Heart right ventricle (tissue), 16 donors: ENCODE measurements at regions of chr17 and their contacts with region 1.

Region 1: DNA sequence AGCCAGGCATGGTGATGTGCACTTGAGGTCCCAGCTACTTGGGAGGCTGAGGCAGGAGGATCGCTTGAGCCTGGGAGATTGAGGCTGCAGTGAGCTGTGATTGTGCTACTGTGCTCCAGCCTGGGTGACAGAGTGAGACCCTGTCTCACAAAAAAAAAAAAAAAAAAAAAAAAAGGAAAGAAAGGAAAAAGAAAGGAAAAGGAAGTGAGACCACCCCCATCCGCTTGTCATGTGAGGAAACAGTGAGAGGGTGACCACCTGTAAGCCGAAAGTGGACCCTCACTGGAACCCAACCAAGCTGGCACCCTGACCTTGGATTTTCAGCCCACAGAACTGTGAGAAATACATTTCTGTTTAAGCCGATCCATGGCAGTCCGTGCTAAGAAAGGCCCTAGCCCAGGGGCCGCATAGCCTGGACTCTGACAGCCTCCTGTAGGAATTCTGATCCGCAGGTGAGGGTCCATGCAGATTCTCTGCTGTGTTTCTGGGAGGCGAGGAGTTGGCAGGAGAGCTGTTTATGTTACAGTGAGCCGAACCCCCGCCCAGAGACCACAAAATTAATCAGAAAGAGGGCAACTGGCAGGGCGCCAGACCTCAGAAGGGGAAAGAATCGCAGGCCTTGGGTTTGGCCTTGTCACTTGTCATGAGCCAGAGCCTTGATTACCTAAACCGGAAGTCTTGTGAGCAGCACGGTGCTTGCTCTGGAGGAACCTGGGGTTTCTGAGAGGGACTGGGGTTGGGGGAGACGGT is 945 bp downstream of the SGSH start:
- DNase-seq: peak; percentile 64 to 70
- ATAC-seq: peak in 7 of 8 donors; percentile 30 to 69 (median 50)
- H3K4me3 ChIP-seq: peak overlapping the region; percentile 66 to 99 (median 92)
- H3K27ac ChIP-seq: peak overlapping the region in 9 of 10 donors; percentile 72 to 91 (median 81)
- H3K4me1 ChIP-seq: peaks cover 6 to 30% (median 19%) of the 10 kb centered on the region in 9 donors
- H3K27me3 ChIP-seq: peaks cover 0 to 9% (median 0%) of the 10 kb centered on the region in 7 donors
- CTCF ChIP-seq: no peak

Region 2: GRCh38 chr17:80063830-80064585 is 155.2 kb before region 1 on chr17:
- intact Hi-C with region 1: no loop called
- DNase-seq: peak in 1 of 2 donors; percentile 38
- ATAC-seq: peak in 6 of 8 donors; percentile 5 to 69 (median 23)
- H3K4me3 ChIP-seq: no peak overlapping the region
- H3K27ac ChIP-seq: peak overlapping the region in 2 of 10 donors; percentile 26 to 73
- H3K4me1 ChIP-seq: peaks cover 6 to 26% (median 9%) of the 10 kb centered on the region in 9 donors
- H3K27me3 ChIP-seq: no peaks in the 10 kb centered on the region
- CTCF ChIP-seq: no peak

Region 3: GRCh38 chr17:80263253-80264204 is 44.3 kb after region 1 on chr17:
- intact Hi-C with region 1: loop called in 2 of 10 experiments (anchors 5 to 10 kb)
- DNase-seq: peak; percentile 63 to 92
- ATAC-seq: peak; percentile 44 to 88 (median 74)
- H3K4me3 ChIP-seq: peak overlapping the region; percentile 26 to 100 (median 62)
- H3K27ac ChIP-seq: peak overlapping the region in 9 of 10 donors; percentile 98 to 100 (median 99)
- H3K4me1 ChIP-seq: peaks cover 13 to 69% (median 47%) of the 10 kb centered on the region in 9 donors
- H3K27me3 ChIP-seq: no peaks in the 10 kb centered on the region
- CTCF ChIP-seq: peak in 5 of 9 donors; percentile 4 to 40 (median 27)

Region 4: DNA sequence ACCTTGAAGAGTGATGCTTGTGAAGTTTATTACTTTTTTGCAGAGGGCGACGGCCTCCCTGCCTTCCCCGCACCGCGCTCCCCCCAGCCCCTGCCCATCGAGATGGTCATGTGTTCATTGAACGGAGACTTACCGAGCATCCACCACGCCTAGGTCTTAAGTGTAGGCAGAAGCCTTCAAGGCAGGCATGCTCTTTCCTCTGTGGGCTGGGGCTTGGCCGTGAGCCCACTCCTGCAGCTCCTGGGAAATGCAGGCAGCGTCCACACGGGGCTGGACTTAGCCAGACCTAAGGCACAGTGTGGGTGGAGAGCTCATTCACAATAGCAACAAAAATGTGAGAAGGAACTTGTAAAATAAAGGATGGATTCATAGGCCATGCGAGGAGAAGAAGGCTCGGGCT is 60.7 kb after region 1 on chr17:
- intact Hi-C with region 1: loop called in 1 of 10 experiments (anchors 10 kb)
- DNase-seq: peak; percentile 63 to 65
- ATAC-seq: peak; percentile 56 to 90 (median 82)
- H3K4me3 ChIP-seq: no peak overlapping the region
- H3K27ac ChIP-seq: peak overlapping the region in 1 of 10 donors; percentile 40
- H3K4me1 ChIP-seq: peaks cover 0 to 46% (median 34%) of the 10 kb centered on the region in 9 donors
- H3K27me3 ChIP-seq: no peaks in the 10 kb centered on the region
- CTCF ChIP-seq: peak in 3 of 9 donors; percentile 10 to 35 (median 31)

Region 5: DNA sequence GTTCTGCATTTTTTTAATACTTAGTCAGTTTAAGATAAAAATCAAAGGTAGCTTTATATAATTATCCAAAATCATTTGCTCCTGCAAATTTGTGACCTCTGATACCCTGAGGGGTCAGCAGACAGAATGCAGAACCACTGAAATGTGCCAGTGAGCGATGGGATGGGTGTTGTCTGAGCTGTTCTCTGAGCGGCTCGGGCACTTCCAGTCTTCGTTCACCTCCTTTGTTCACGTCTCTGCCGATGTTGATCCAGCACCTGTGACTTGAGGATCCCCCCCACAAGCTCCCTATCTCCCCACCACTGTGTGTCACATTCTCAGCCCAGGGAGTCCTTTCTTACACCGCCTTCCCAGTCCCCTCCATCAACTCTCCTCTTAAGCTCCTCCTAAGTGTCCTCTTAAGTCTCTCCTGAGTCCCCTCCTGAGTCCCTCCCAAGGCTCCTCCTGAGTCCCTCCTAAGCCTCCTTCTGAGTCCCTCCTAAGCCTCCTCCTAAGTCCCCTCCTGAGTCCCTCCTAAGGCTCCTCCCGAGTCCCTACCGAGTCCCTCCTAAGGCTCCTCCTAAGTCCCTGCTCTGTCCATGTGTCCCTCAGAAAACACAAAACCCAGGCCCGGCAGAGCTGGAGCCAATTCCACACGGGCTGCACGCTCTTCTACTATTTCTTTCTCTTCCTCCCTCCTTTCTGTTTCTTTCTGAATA is 89.0 kb after region 1 on chr17:
- intact Hi-C with region 1: no loop called
- DNase-seq: no peak
- ATAC-seq: no peak
- H3K4me3 ChIP-seq: no peak overlapping the region
- H3K27ac ChIP-seq: no peak overlapping the region
- H3K4me1 ChIP-seq: no peaks in the 10 kb centered on the region
- H3K27me3 ChIP-seq: no peaks in the 10 kb centered on the region
- CTCF ChIP-seq: no peak

Region 6: DNA sequence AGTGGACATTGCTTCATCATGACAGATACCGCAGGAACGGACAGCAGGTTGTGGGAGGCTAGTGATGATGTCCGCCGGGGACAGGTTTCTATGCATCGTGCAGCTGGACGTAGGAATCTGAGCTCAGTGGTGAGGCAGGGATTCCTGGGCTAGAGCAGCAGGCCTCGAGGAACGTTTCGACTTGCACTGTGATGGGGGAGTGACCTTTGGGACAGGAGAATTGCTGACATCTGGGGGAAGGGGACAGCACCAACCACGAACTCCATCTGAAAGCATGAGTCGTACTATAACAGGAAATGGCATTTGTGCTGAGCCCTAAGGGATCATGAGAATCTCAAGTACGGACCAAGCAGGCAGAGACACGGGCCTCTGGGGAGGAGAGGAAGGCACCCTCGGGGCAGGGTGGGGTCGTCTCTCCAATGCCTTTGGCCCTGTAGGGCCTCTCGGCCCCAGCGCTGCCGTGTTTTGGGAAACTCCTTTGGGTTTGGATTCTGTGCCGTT is 130.0 kb after region 1 on chr17:
- intact Hi-C with region 1: no loop called
- DNase-seq: no peak
- ATAC-seq: peak in 1 of 8 donors; percentile 18
- H3K4me3 ChIP-seq: no peak overlapping the region
- H3K27ac ChIP-seq: no peak overlapping the region
- H3K4me1 ChIP-seq: no peaks in the 10 kb centered on the region
- H3K27me3 ChIP-seq: no peaks in the 10 kb centered on the region
- CTCF ChIP-seq: no peak